Caco-2 (cell line): ENCODE measurements at regions of chr3 and their contacts with region 1.

Region 1: GRCh38 chr3:69080233-69080920 is at the start of gene UBA3:
- DNase-seq: peak; percentile 88 to 90
- H3K4me3 ChIP-seq: peak within 1 kb of the TSS; percentile 75
- H3K4me3 Mint-ChIP-seq: peak within 1 kb of the TSS; percentile 75
- H3K27ac Mint-ChIP-seq: peak within 1 kb of the TSS; percentile 75
- H3K4me1 ChIP-seq: peaks cover 5% of the 10 kb centered on the region; the same call in 1 of the 2 replicates
- H3K4me1 Mint-ChIP-seq: peaks cover 18% of the 10 kb centered on the region
- H3K27me3 ChIP-seq: no peaks in the 10 kb centered on the region
- H3K27me3 Mint-ChIP-seq: no peaks in the 10 kb centered on the region
- CTCF ChIP-seq: no peak
- total RNA-seq, gene UBA3: 45.7 and 49.6 TPM in 2 replicates

Region 2: GRCh38 chr3:69013253-69014021 is 66.9 kb before region 1 on chr3 and contains the start of gene EOGT:
- CTCF ChIA-PET with region 1: no interaction called
- POLR2A ChIA-PET with region 1: no interaction called
- intact Hi-C with region 1: loop called (anchors 2 kb)
- DNase-seq: peak; percentile 89 to 96
- H3K4me3 ChIP-seq: peak within 1 kb of the TSS; percentile 90
- H3K4me3 Mint-ChIP-seq: peak within 1 kb of the TSS; percentile 91
- H3K27ac Mint-ChIP-seq: peak within 1 kb of the TSS; percentile 83
- H3K4me1 ChIP-seq: 0 out of 2 replicates have a peak, but pooled peaks cover 6% of the 10 kb centered on the region
- H3K4me1 Mint-ChIP-seq: no peaks in the 10 kb centered on the region
- H3K27me3 ChIP-seq: no peaks in the 10 kb centered on the region
- H3K27me3 Mint-ChIP-seq: no peaks in the 10 kb centered on the region
- CTCF ChIP-seq: peak; percentile 74 to 76
- total RNA-seq, gene EOGT: 16.1 and 17.1 TPM in 2 replicates

Region 3: GRCh38 chr3:69051756-69052471 is 28.5 kb before region 1 on chr3 and contains the start of gene TMF1:
- CTCF ChIA-PET with region 1: no interaction called
- POLR2A ChIA-PET with region 1: interaction called, 3 read pairs
- intact Hi-C with region 1: loop called (anchors 2 kb)
- DNase-seq: peak; percentile 96 to 98
- H3K4me3 ChIP-seq: peak within 1 kb of the TSS; percentile 79
- H3K4me3 Mint-ChIP-seq: peak within 1 kb of the TSS; percentile 97
- H3K27ac Mint-ChIP-seq: peak within 1 kb of the TSS; percentile 99
- H3K4me1 ChIP-seq: peaks cover 8% of the 10 kb centered on the region
- H3K4me1 Mint-ChIP-seq: peaks cover 7% of the 10 kb centered on the region
- H3K27me3 ChIP-seq: no peaks in the 10 kb centered on the region
- H3K27me3 Mint-ChIP-seq: no peaks in the 10 kb centered on the region
- CTCF ChIP-seq: no peak
- total RNA-seq, gene TMF1: 30.2 and 35.0 TPM in 2 replicates

Region 4: GRCh38 chr3:69116897-69117296 is 36.5 kb after region 1 on chr3:
- CTCF ChIA-PET with region 1: no interaction called
- POLR2A ChIA-PET with region 1: no interaction called
- intact Hi-C with region 1: no loop called
- DNase-seq: peak; percentile 18 to 43
- H3K4me3 ChIP-seq: no peak overlapping the region
- H3K4me3 Mint-ChIP-seq: no peak overlapping the region
- H3K27ac Mint-ChIP-seq: no peak overlapping the region
- H3K4me1 ChIP-seq: peaks cover 8% of the 10 kb centered on the region; the same call in 1 of the 2 replicates
- H3K4me1 Mint-ChIP-seq: no peaks in the 10 kb centered on the region
- H3K27me3 ChIP-seq: no peaks in the 10 kb centered on the region
- H3K27me3 Mint-ChIP-seq: no peaks in the 10 kb centered on the region
- CTCF ChIP-seq: no peak